Transverse colon (tissue), 4 donors: ENCODE measurements at regions of chr4 and their contacts with region 1.

Region 1: DNA sequence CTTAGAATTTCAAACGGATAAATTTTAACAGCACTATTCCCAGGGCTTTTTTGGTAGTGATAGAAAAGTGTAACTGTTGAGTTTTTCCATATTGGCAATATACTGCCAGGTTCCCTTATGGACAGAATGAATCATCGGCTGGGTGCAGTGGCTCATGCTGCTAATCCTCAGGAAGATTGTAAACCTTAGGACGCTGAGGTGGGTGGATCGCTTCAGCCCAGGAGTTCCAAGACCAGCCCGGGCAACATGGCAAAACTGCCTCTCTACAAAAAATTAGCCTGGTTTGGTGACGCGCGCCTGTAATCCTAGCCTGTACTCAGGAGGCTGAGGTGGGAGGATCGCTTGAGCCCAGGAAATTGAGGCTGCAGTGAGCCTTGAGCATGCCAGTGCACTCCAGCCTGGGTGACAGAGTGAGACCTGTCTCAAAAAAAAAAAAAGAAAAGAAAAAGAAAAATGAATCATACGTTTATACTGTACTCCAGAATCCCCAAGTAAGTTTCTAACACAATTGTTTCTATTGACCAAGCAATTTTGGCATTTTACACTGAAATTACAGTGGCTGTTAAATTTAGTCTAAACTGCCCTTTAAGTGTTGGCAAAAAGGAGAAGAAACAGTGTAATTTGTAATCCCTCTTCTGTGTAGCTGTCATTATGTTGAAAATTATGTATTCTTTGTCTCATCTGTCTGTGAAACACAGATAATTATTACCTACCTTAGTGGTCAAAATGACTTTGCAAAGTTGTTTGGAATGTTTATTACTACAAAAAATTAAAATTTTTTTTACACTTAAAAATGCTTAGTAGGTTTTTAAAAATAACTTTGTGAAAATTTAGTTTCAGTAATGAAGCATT is 1.8 kb downstream of the SLC30A9 start:
- DNase-seq: no peak
- H3K4me3 ChIP-seq: no peak overlapping the region
- H3K27ac ChIP-seq: no peak overlapping the region
- H3K4me1 ChIP-seq: peaks cover 10 to 32% (median 20%) of the 10 kb centered on the region in 4 donors
- H3K27me3 ChIP-seq: no peaks in the 10 kb centered on the region
- CTCF ChIP-seq: no peak
- EP300 ChIP-seq: no peak
- POLR2A ChIP-seq: no peak

Region 2: DNA sequence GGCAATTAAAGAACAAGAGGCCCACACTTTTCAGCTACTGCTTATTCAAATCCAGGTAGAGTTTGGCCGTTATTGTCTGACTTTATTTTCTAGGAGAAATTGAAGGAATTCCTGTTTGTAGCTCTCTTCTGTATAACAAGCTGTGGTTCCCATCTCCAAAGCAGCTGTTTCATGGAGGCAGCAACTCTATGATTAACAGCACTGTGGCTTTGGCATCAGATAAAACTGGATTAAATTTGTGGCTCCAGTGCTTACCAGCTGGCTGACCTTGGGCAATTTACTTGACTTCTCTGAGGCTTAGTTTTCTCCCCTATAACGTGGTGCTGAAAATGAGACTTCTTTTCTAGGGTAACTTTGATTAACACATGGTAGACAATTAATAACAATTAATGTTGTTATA is 26.3 kb after region 1 on chr4:
- in situ Hi-C with region 1: no loop called
- intact Hi-C with region 1: loop called (anchors 2 kb)
- DNase-seq: no peak
- H3K4me3 ChIP-seq: no peak overlapping the region
- H3K27ac ChIP-seq: no peak overlapping the region
- H3K4me1 ChIP-seq: peaks cover 0 to 3% (median 0%) of the 10 kb centered on the region in 4 donors
- H3K27me3 ChIP-seq: no peaks in the 10 kb centered on the region
- CTCF ChIP-seq: no peak
- EP300 ChIP-seq: no peak
- POLR2A ChIP-seq: no peak

Region 3: DNA sequence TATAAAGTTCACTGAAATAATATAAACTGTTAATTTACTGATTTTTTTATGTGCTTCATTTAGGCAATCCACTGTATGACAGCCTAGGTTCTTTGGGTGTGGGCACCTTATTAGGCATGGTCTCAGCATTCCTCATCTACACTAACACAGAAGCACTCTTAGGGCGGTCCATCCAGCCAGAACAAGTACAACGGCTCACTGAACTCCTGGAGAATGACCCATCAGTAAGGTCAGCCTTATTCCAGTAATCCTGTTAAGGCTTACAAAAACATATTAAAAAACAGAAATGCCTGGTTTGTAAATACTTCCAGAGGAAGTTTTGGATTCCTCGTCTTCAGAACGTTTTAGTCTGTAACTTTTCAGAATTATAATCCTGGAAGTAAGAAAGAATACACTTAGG is 78.3 kb after region 1 on chr4:
- in situ Hi-C with region 1: no loop called
- intact Hi-C with region 1: no loop called
- DNase-seq: no peak
- H3K4me3 ChIP-seq: no peak overlapping the region
- H3K27ac ChIP-seq: no peak overlapping the region
- H3K4me1 ChIP-seq: no peaks in the 10 kb centered on the region
- H3K27me3 ChIP-seq: no peaks in the 10 kb centered on the region
- CTCF ChIP-seq: no peak
- EP300 ChIP-seq: no peak
- POLR2A ChIP-seq: no peak

Region 4: DNA sequence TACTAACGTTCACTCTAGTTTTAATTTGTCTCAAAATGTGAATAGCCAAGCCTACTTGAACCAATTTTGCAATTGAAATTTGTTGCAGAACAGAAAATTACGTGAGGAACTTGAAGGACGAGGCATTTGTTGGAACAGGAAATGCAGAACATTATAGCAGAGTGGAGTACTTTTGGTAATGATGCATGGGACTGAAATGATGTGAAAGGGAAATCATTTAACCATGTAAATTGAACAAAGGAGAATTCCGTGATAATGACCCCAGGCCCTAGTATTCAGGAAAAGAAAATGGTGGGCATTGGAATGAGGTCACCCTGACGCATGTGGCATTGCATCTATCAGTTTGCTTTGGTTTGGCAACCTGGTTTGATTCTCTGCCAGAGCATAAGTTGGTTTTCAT is 205.2 kb after region 1 on chr4:
- in situ Hi-C with region 1: no loop called
- intact Hi-C with region 1: no loop called
- DNase-seq: no peak
- H3K4me3 ChIP-seq: no peak overlapping the region
- H3K27ac ChIP-seq: no peak overlapping the region
- H3K4me1 ChIP-seq: no peaks in the 10 kb centered on the region
- H3K27me3 ChIP-seq: no peaks in the 10 kb centered on the region
- CTCF ChIP-seq: no peak
- EP300 ChIP-seq: no peak
- POLR2A ChIP-seq: no peak